Natural killer cell (primary cell): ENCODE measurements at regions of chr5 and their contacts with region 1.

Region 1: GRCh38 chr5:67299231-67299735 is 102.7 kb upstream of the CD180 start:
- DNase-seq: no peak
- ATAC-seq: peak; percentile 54 to 76 (median 73)
- H3K4me3 ChIP-seq: no peak overlapping the region
- H3K4me3 Mint-ChIP-seq: no peak overlapping the region
- H3K27ac ChIP-seq: no peak overlapping the region
- H3K27ac Mint-ChIP-seq: peak overlapping the region in 1 of 2 donors; percentile 58
- H3K4me1 ChIP-seq: no peaks in the 10 kb centered on the region
- H3K4me1 Mint-ChIP-seq: peaks cover 17 to 50% of the 10 kb centered on the region in 2 donors
- H3K27me3 ChIP-seq: no peaks in the 10 kb centered on the region
- H3K27me3 Mint-ChIP-seq: peaks cover 8 to 9% of the 10 kb centered on the region in 2 donors
- CTCF ChIP-seq: no peak

Region 2: DNA sequence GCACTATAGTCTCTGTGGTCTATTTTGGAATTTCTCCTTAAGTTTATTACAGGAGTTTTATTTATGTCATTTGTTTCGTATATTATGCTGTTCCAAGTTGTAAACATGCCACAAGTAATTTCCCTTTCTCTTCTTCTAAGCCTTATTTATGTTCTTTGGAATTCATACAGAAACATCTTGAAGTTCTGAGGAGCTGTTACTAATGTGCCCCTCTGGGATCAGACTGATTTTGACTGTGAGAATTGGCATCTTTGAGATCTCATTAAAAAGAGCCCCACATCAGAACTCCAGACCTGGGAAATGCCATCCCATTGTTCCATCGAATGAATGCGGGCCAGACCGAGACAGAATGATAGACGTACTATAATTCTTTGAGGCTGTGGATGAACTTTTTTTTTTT is 36.1 kb after region 1 on chr5:
- intact Hi-C with region 1: no loop called
- DNase-seq: no peak
- ATAC-seq: no peak
- H3K4me3 ChIP-seq: no peak overlapping the region
- H3K4me3 Mint-ChIP-seq: no peak overlapping the region
- H3K27ac ChIP-seq: no peak overlapping the region
- H3K27ac Mint-ChIP-seq: no peak overlapping the region
- H3K4me1 ChIP-seq: no peaks in the 10 kb centered on the region
- H3K4me1 Mint-ChIP-seq: no peaks in the 10 kb centered on the region
- H3K27me3 ChIP-seq: no peaks in the 10 kb centered on the region
- H3K27me3 Mint-ChIP-seq: peaks cover 5 to 13% of the 10 kb centered on the region in 2 donors
- CTCF ChIP-seq: no peak

Region 3: GRCh38 chr5:67510204-67510603 is 210.9 kb after region 1 on chr5:
- intact Hi-C with region 1: loop called (anchors 5 kb)
- DNase-seq: no peak
- ATAC-seq: peak in 2 of 3 donors; percentile 25 to 43
- H3K4me3 ChIP-seq: no peak overlapping the region
- H3K4me3 Mint-ChIP-seq: peak overlapping the region; percentile 66
- H3K27ac ChIP-seq: no peak overlapping the region
- H3K27ac Mint-ChIP-seq: peak overlapping the region; percentile 5 to 56
- H3K4me1 ChIP-seq: peaks cover 14% of the 10 kb centered on the region
- H3K4me1 Mint-ChIP-seq: peaks cover 41 to 44% of the 10 kb centered on the region in 2 donors
- H3K27me3 ChIP-seq: no peaks in the 10 kb centered on the region
- H3K27me3 Mint-ChIP-seq: peaks cover 0 to 7% of the 10 kb centered on the region in 2 donors
- CTCF ChIP-seq: no peak